CD4-positive, alpha-beta T cell (primary cell): ENCODE measurements at regions of chr10 and their contacts with region 1.

Region 1: GRCh38 chr10:123559066-123559822 is 106.9 kb upstream of the GPR26 start:
- DNase-seq: peak; percentile 36 to 79 (median 61)
- ATAC-seq: peak; percentile 66
- H3K4me3 ChIP-seq: no peak overlapping the region
- H3K4me3 Mint-ChIP-seq: no peak overlapping the region
- H3K27ac ChIP-seq: no peak overlapping the region
- H3K27ac Mint-ChIP-seq: no peak overlapping the region
- H3K4me1 ChIP-seq: peaks cover 4% of the 10 kb centered on the region
- H3K4me1 Mint-ChIP-seq: no peaks in the 10 kb centered on the region
- H3K27me3 ChIP-seq: peaks cover 0 to 4% of the 10 kb centered on the region in 2 experiments
- H3K27me3 Mint-ChIP-seq: peaks cover 32% of the 10 kb centered on the region
- CTCF ChIP-seq: peak; percentile 98

Region 2: GRCh38 chr10:122648599-122649428 is 910.4 kb before region 1 on chr10:
- CTCF ChIA-PET with region 1: no interaction called
- POLR2A ChIA-PET with region 1: no interaction called
- intact Hi-C with region 1: loop called in 1 of 2 experiments (anchors 2 kb)
- DNase-seq: peak in 5 of 14 experiments; percentile 5 to 29 (median 17)
- ATAC-seq: no peak
- H3K4me3 ChIP-seq: no peak overlapping the region
- H3K4me3 Mint-ChIP-seq: no peak overlapping the region
- H3K27ac ChIP-seq: no peak overlapping the region
- H3K27ac Mint-ChIP-seq: no peak overlapping the region
- H3K4me1 ChIP-seq: no peaks in the 10 kb centered on the region
- H3K4me1 Mint-ChIP-seq: no peaks in the 10 kb centered on the region
- H3K27me3 ChIP-seq: peaks cover 7 to 9% of the 10 kb centered on the region in 2 experiments
- H3K27me3 Mint-ChIP-seq: peaks cover 42% of the 10 kb centered on the region
- CTCF ChIP-seq: peak; percentile 21

Region 3: GRCh38 chr10:123043409-123043925 is 515.8 kb before region 1 on chr10:
- CTCF ChIA-PET with region 1: no interaction called
- POLR2A ChIA-PET with region 1: no interaction called
- intact Hi-C with region 1: loop called (anchors 1 kb)
- DNase-seq: peak; percentile 12 to 72 (median 30)
- ATAC-seq: peak; percentile 69
- H3K4me3 ChIP-seq: no peak overlapping the region
- H3K4me3 Mint-ChIP-seq: no peak overlapping the region
- H3K27ac ChIP-seq: no peak overlapping the region
- H3K27ac Mint-ChIP-seq: no peak overlapping the region
- H3K4me1 ChIP-seq: peaks cover 2% of the 10 kb centered on the region
- H3K4me1 Mint-ChIP-seq: peaks cover 8% of the 10 kb centered on the region
- H3K27me3 ChIP-seq: no peaks in the 10 kb centered on the region
- H3K27me3 Mint-ChIP-seq: no peaks in the 10 kb centered on the region
- CTCF ChIP-seq: peak; percentile 69